Breast epithelium (tissue), 4 donors: ENCODE measurements at regions of chr10 and their contacts with region 1.

Region 1: GRCh38 chr10:70515035-70515667 is 36.6 kb downstream of the PALD1 start:
- DNase-seq: no peak
- H3K4me3 ChIP-seq: no peak overlapping the region
- H3K27ac ChIP-seq: no peak overlapping the region
- H3K4me1 ChIP-seq: peaks cover 0 to 8% of the 10 kb centered on the region in 2 donors
- H3K27me3 ChIP-seq: no peaks in the 10 kb centered on the region
- CTCF ChIP-seq: no peak
- POLR2A ChIP-seq: no peak

Region 2: DNA sequence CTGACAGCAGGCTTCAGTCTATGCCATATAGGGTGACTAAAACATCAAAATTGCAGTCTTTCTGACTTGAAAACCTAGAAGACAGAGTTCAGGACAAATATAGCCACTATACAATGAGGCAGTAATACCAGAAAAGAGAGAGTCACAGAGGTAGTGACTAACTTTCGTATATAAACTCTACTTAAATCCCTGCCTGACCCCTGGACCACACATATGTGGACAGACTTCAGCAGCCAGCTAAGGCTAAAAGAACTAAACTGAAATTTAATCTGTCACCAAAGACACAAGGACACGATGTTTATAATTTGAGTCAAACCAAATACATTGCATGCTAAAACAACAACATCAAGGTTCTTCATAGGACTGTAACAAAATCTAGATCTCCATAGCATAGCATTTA is 527.1 kb before region 1 on chr10:
- intact Hi-C with region 1: no loop called
- DNase-seq: no peak
- H3K4me3 ChIP-seq: no peak overlapping the region
- H3K27ac ChIP-seq: no peak overlapping the region
- H3K4me1 ChIP-seq: no peaks in the 10 kb centered on the region
- H3K27me3 ChIP-seq: no peaks in the 10 kb centered on the region
- CTCF ChIP-seq: no peak
- POLR2A ChIP-seq: no peak

Region 3: DNA sequence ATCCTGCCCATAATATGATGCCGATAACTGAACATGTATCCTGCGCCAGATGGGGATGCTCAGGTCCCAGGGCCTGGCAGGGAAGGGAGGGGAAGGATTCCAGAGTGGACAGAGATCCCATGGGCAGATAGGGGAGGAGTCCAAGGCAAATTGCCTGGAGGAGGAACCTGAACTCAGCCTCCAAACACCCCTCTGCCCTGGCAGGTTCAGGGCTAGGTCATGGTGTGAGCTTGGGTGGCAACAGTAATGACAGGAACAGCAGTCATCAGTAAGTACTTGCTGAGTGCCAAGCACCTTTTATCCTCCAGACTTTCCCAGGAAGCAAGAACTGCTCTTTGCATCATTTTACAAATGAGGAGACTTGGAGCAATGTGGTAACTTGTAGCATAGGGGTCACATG is 40.4 kb before region 1 on chr10:
- intact Hi-C with region 1: loop called (anchors 1 kb)
- DNase-seq: no peak
- H3K4me3 ChIP-seq: no peak overlapping the region
- H3K27ac ChIP-seq: no peak overlapping the region
- H3K4me1 ChIP-seq: peaks cover 5 to 11% of the 10 kb centered on the region in 2 donors
- H3K27me3 ChIP-seq: no peaks in the 10 kb centered on the region
- CTCF ChIP-seq: no peak
- POLR2A ChIP-seq: no peak

Region 4: GRCh38 chr10:70729763-70730352 is 214.7 kb after region 1 on chr10:
- intact Hi-C with region 1: no loop called
- DNase-seq: no peak
- H3K4me3 ChIP-seq: no peak overlapping the region
- H3K27ac ChIP-seq: no peak overlapping the region
- H3K4me1 ChIP-seq: no peaks in the 10 kb centered on the region
- H3K27me3 ChIP-seq: peaks cover 0 to 3% of the 10 kb centered on the region in 2 donors
- CTCF ChIP-seq: no peak
- POLR2A ChIP-seq: no peak

Region 5: DNA sequence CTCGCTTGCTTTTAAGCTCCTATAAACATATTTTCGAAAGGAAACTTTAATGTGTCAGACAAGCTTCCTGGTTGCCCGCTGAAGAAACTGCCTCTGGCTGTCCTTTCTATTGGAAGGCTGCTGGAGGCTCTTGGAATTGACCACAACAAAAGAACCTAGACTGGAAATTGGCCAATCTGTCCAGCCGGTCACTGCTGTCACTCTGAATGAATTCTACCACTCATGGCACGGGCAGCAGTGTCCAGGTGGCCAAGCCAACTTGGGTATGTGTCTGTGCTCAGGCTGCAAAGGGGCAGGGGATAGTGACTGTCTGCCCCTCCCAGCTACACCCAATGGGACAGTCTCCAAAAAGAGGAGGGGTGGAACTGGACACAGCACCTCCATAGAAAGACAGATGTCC is 939.2 kb after region 1 on chr10:
- intact Hi-C with region 1: no loop called
- DNase-seq: no peak
- H3K4me3 ChIP-seq: no peak overlapping the region
- H3K27ac ChIP-seq: no peak overlapping the region
- H3K4me1 ChIP-seq: no peaks in the 10 kb centered on the region
- H3K27me3 ChIP-seq: no peaks in the 10 kb centered on the region
- CTCF ChIP-seq: no peak
- POLR2A ChIP-seq: no peak